Heart left ventricle (tissue), 16 donors: ENCODE measurements at regions of chr6 and their contacts with region 1.

Region 1: DNA sequence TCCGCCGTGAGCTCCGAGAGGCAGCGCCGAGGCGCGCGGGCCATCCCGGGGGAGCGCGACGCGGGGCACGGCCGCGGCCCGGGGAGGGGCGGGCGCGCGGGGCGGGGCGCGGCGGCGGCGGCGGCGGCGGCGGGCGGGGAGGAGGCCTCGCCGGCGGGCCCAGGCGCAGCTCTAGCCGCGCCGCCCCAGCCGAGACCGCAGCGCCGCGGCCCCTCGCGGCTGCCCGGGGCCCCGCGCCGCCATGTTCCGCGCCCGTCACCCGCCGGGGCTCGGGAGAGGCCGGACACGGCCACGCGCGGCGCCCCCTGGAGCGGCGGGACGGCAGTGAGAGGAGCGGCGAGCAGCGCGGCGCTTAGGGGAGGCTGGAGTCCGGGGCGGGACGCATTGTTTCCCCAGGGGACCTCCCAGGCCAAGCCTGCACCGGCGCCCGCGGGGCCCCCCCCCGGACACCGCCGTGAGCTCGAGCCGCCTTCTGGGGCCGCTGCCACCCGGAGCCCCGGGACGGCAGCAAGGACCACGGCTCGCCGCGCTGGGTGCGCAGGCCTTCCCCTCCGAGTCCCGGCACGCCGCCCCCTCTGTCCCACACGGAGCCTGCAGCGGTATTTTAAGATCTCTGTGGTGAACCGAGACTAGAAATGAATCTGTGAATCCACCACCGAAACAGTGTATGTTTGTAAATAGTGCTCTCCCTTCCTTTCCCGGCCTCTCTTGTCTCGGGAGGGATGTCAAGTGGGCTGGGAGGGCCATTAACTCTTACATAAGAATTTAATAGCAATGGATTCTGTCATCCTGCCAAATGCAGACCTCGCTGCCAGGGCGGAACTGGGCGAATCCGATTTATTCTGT is at the start of gene KIF13A:
- DNase-seq: peak; percentile 78 to 88 (median 81)
- ATAC-seq: peak; percentile 23 to 83 (median 73)
- H3K4me3 ChIP-seq: peak within 1 kb of the TSS; percentile 52 to 97 (median 80)
- H3K27ac ChIP-seq: peak within 1 kb of the TSS; percentile 93 to 99 (median 96)
- H3K4me1 ChIP-seq: peaks cover 0 to 46% (median 19%) of the 10 kb centered on the region in 12 donors
- H3K27me3 ChIP-seq: peaks cover 0 to 2% (median 0%) of the 10 kb centered on the region in 9 donors
- CTCF ChIP-seq: peak in 9 of 12 donors; percentile 8 to 58 (median 32)
- POLR2A ChIP-seq: peak in 1 of 2 donors; percentile 52
- total RNA-seq, gene KIF13A: 49.2 to 148 (median 85.1) TPM

Region 2: GRCh38 chr6:17706580-17707370 is 281.0 kb before region 1 on chr6 and contains the start of gene NUP153:
- intact Hi-C with region 1: loop called in 1 of 10 experiments (anchors 10 kb)
- DNase-seq: peak; percentile 98 to 99 (median 99)
- ATAC-seq: peak; percentile 86 to 92 (median 86)
- H3K4me3 ChIP-seq: peak within 1 kb of the TSS; percentile 60 to 100 (median 87)
- H3K27ac ChIP-seq: peak within 1 kb of the TSS; percentile 94 to 100 (median 96)
- H3K4me1 ChIP-seq: peaks cover 7 to 43% (median 32%) of the 10 kb centered on the region in 12 donors
- H3K27me3 ChIP-seq: no peaks in the 10 kb centered on the region
- CTCF ChIP-seq: peak in 1 of 12 donors; percentile 10
- POLR2A ChIP-seq: peak; percentile 19 to 92
- total RNA-seq, gene NUP153: 19.5 to 31.7 (median 28.1) TPM

Region 3: DNA sequence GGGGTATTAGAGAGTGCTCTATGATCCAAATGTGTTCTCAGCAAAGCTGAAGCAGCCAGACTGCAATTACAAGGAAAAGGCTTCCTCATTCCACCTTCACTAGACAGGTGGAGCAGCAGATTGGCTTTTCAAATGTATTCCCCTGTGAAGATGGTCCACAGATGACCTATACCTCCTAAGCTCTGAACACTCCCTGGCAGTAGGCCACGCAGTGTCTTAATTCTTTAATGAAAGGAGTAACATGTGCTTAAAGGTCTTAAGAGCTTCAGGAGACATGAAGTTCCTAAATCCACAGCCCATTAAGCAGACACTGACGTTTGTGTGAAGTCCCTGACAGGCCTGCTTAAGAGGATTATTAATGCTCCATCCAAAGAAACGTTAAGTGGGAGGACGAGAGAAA is 142.2 kb before region 1 on chr6:
- intact Hi-C with region 1: loop called in 2 of 10 experiments (anchors 5 to 10 kb)
- DNase-seq: no peak
- ATAC-seq: no peak
- H3K4me3 ChIP-seq: no peak overlapping the region
- H3K27ac ChIP-seq: no peak overlapping the region
- H3K4me1 ChIP-seq: no peaks in the 10 kb centered on the region
- H3K27me3 ChIP-seq: no peaks in the 10 kb centered on the region
- CTCF ChIP-seq: peak in 3 of 12 donors; percentile 8 to 25 (median 19)
- POLR2A ChIP-seq: no peak

Region 4: GRCh38 chr6:17932330-17932852 is 55.4 kb before region 1 on chr6:
- intact Hi-C with region 1: loop called (anchors 2 to 10 kb)
- DNase-seq: peak in 4 of 5 donors; percentile 77 to 84 (median 82)
- ATAC-seq: peak; percentile 90 to 95 (median 92)
- H3K4me3 ChIP-seq: peak overlapping the region in 5 of 12 donors; percentile 6 to 19 (median 9)
- H3K27ac ChIP-seq: peak overlapping the region; percentile 75 to 90 (median 82)
- H3K4me1 ChIP-seq: peaks cover 9 to 98% (median 86%) of the 10 kb centered on the region in 12 donors
- H3K27me3 ChIP-seq: no peaks in the 10 kb centered on the region
- CTCF ChIP-seq: no peak
- POLR2A ChIP-seq: no peak

Region 5: DNA sequence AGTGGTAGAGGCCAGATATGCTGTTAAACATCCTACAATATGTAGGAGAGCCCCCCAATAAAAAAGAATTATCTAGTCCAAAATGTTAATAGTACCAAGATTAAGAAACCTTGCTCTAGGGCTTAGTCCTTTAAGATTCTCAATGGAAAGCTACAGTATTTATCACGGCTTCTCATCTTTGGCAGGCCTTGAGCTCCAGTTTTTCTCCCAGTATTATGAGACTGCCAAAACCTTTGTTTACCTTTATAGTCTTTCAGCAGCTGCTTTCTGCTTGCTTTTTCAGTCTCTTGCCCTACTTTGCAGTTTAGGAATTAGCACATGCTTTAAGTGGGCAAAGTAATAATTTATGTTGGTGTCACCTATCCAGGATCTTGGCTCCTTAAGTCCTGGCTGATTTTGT is 74.9 kb after region 1 on chr6:
- intact Hi-C with region 1: no loop called
- DNase-seq: no peak
- ATAC-seq: no peak
- H3K4me3 ChIP-seq: no peak overlapping the region
- H3K27ac ChIP-seq: no peak overlapping the region
- H3K4me1 ChIP-seq: no peaks in the 10 kb centered on the region
- H3K27me3 ChIP-seq: no peaks in the 10 kb centered on the region
- CTCF ChIP-seq: no peak
- POLR2A ChIP-seq: no peak